ENCODE measurements at regions of chr5 and their contacts with region 1.

Region 1: DNA sequence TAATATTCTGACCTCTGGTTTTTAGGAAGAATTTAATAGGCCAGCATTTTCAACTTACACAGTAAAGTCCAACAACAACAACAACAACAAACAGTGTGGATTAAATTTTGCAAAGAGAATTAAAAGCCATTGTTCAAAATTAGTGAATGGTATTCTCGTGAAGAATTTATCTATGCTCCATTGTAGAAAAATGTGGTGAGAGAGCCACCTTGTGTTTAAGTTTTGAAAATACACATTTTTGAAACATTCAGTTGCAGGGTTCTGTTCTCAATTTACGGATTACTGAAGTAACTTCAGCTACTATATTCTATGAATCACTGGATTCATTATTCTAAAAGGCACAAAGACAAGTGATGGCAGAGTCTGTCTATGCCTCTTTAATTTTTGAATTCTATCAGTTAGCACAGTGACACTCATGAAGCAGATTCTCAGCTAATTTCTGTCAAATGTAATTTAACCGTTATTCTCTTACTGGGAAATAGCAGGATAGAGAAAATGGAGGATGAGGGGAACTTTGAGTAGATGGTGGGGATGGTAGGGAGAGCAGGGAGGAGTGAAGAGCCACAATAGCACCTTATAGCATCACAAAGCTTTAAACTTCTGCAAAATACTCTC is 11.0 kb downstream of the CCDC152 start:
- DNase-seq: no peak
- H3K4me3 Mint-ChIP-seq: no peak overlapping the region
- H3K27ac Mint-ChIP-seq: no peak overlapping the region
- H3K4me1 Mint-ChIP-seq: peaks cover 10% of the 10 kb centered on the region
- H3K27me3 Mint-ChIP-seq: no peaks in the 10 kb centered on the region
- CTCF ChIP-seq: peak; percentile 39

Region 2: DNA sequence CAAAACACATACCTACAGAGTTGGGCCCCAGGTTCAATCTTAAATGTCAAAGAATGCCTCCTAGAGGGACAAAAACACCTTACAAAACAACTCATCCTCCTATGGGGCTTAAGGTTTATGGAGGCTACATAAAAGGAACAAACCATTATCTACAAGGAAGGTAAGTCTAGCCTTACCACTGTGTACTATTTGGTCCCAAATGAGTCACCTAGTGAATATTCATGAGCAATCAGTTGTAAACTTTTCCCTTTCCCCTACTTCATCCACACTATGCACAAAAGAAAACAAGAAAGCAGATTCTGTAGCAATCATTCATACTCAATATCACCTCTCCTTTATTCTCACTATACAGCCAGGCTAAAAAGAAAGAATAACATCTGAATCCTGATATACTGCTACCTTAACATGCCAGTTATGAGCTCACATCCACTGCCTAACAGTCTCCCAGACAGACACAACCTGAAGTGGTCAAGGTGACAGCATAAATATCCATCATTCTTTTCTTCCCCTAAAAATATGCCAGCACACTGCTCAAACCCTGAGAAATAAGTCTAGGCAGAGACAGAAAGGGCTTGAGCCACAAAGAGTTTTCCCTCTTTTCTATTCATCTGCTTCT is 903.6 kb before region 1 on chr5:
- CTCF ChIA-PET with region 1: no interaction called
- intact Hi-C with region 1: loop called (anchors 5 kb)
- DNase-seq: no peak
- H3K4me3 Mint-ChIP-seq: no peak overlapping the region
- H3K27ac Mint-ChIP-seq: peak overlapping the region; percentile 24
- H3K4me1 Mint-ChIP-seq: peaks cover 7% of the 10 kb centered on the region
- H3K27me3 Mint-ChIP-seq: no peaks in the 10 kb centered on the region
- CTCF ChIP-seq: no peak

Region 3: GRCh38 chr5:42005561-42006153 is 761.9 kb before region 1 on chr5:
- CTCF ChIA-PET with region 1: no interaction called
- intact Hi-C with region 1: loop called (anchors 10 kb)
- DNase-seq: no peak
- H3K4me3 Mint-ChIP-seq: no peak overlapping the region
- H3K27ac Mint-ChIP-seq: no peak overlapping the region
- H3K4me1 Mint-ChIP-seq: no peaks in the 10 kb centered on the region
- H3K27me3 Mint-ChIP-seq: no peaks in the 10 kb centered on the region
- CTCF ChIP-seq: peak; percentile 71

Region 4: DNA sequence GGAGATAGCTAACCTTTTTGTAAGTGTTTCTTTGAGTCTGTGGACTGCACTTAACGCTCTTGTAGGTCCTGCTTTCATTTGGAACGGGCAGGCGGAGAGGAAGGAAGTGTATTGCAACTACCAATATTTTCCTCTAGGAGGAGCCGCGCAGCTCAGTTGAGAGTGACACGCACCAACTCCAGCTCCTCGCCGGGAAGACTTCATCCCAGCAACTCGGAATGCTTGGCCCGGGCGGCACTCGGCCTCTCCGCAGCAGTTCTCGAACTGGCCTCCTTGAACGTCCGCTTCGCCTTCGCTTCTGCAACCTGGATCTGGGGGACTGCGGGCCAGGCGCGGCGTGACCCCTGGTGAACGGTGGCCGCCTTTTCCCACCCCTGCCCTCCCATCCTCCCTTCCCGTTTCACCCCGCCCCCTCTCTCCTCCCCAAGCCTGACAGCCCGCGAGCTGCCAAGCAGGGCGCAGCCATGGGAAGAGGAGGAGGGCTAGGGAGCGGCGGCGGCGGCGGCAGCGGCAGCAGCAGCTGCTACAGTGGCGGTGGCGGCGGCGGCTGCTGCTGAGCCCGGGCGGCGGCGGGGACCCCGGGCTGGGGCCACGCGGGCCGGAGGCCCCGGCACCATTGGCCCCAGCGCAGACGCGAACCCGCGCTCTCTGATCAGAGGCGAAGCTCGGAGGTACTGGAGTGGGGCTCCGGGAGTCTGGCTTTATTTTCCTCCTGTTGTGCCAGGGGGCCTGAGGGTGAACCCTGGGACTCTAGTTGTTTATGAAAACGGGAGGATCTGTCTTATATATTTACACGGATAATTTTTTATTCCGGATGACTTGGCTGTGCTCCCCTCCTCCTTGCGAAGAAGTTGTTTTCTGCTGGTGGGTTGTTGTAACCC is 344.1 kb before region 1 on chr5 and contains the start of gene GHR:
- CTCF ChIA-PET with region 1: interaction called, 3 read pairs
- intact Hi-C with region 1: loop called (anchors 5 kb)
- DNase-seq: peak; percentile 77
- H3K4me3 Mint-ChIP-seq: no peak within 1 kb of the TSS
- H3K27ac Mint-ChIP-seq: no peak within 1 kb of the TSS
- H3K4me1 Mint-ChIP-seq: no peaks in the 10 kb centered on the region
- H3K27me3 Mint-ChIP-seq: peaks cover 12% of the 10 kb centered on the region
- CTCF ChIP-seq: peak; percentile 77
- total RNA-seq, gene GHR: 0.45 and 0.69 TPM in 2 replicates

Region 5: DNA sequence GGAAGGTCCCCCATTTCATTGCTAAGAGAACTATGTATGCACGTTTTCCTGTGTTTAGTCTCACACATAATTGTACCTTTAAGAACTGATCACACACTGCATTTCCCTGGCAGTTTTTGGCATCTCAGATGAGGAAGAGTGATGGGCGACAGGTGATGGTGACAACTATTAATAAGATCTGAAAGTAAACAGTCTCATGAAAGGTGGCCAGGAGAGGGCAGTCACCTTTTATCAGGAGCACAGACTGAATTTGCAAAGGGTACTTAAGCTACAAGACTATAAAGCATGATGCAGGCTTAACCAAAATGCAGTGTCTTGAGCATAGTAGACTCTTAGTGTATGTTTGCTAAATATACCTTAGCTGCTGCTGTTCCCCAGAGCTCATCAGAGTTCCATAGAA is 252.8 kb before region 1 on chr5:
- CTCF ChIA-PET with region 1: no interaction called
- intact Hi-C with region 1: loop called (anchors 5 kb)
- DNase-seq: no peak
- H3K4me3 Mint-ChIP-seq: no peak overlapping the region
- H3K27ac Mint-ChIP-seq: no peak overlapping the region
- H3K4me1 Mint-ChIP-seq: no peaks in the 10 kb centered on the region
- H3K27me3 Mint-ChIP-seq: peaks cover 2% of the 10 kb centered on the region
- CTCF ChIP-seq: no peak

Region 6: GRCh38 chr5:42583322-42583721 is 184.3 kb before region 1 on chr5:
- CTCF ChIA-PET with region 1: no interaction called
- intact Hi-C with region 1: loop called (anchors 5 kb)
- DNase-seq: peak; percentile 56
- H3K4me3 Mint-ChIP-seq: no peak overlapping the region
- H3K27ac Mint-ChIP-seq: no peak overlapping the region
- H3K4me1 Mint-ChIP-seq: no peaks in the 10 kb centered on the region
- H3K27me3 Mint-ChIP-seq: peaks cover 60% of the 10 kb centered on the region
- CTCF ChIP-seq: peak; percentile 58

Region 7: GRCh38 chr5:42636425-42636824 is 131.2 kb before region 1 on chr5:
- CTCF ChIA-PET with region 1: no interaction called
- intact Hi-C with region 1: loop called (anchors 2 kb)
- DNase-seq: no peak
- H3K4me3 Mint-ChIP-seq: no peak overlapping the region
- H3K27ac Mint-ChIP-seq: no peak overlapping the region
- H3K4me1 Mint-ChIP-seq: no peaks in the 10 kb centered on the region
- H3K27me3 Mint-ChIP-seq: peaks cover 30% of the 10 kb centered on the region
- CTCF ChIP-seq: peak; percentile 32

Measured in Calu3 (cell line).